ENCODE measurements at regions of chr5 and their contacts with region 1.

Region 1: DNA sequence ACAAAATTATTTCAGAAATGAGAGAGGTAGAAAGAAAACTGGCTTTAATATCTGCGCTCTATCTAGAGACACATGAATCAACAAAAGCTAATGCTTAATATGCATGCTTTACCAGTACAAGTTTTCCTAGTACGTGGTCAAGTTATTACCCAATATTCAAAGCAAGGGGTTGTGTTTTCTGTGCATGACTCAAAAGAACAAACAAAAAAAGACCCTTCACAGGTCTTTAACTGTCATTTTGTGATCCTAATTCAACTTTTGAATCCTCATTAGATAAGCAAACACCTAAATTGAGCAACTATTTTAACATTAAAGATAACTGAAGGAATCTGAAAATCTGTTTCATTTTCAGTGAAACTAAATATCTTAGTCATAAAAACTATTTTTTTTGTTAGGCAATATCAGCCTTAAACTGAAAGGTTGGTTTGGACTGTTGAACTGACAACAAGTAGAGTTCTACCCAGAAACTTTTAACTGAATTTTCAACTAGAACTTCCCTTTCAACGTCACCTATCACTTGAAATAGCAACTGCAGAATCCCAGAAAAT is 12.5 kb downstream of the ST8SIA4 start:
- DNase-seq: no peak
- H3K4me3 Mint-ChIP-seq: peak overlapping the region; percentile 62
- H3K27ac Mint-ChIP-seq: peak overlapping the region; percentile 86
- H3K4me1 Mint-ChIP-seq: peaks cover 56% of the 10 kb centered on the region
- H3K27me3 Mint-ChIP-seq: no peaks in the 10 kb centered on the region

Region 2: DNA sequence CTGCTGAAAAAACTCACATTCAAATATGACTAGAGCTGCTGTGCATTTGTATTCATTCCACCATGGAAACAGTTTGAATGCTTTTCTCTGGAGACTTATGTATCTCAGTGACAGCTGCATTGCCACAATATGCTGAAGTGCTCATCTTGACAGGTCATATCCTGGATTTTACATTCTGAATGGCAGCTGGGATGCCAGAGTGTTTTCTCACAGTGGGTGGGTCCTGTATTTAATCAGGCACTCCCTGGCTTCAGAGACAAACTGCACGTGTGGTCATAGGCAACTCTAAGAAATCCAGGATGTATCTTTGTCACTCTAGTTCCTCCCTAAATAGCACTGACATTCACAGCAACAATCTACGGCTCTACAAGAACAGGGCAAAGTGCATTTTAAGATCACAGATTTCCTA is 63.0 kb before region 1 on chr5:
- CTCF ChIA-PET with region 1: interaction called, 3 read pairs
- POLR2A ChIA-PET with region 1: no interaction called
- intact Hi-C with region 1: loop called (anchors 1 kb)
- DNase-seq: peak; percentile 23
- H3K4me3 Mint-ChIP-seq: no peak overlapping the region
- H3K27ac Mint-ChIP-seq: peak overlapping the region; percentile 79
- H3K4me1 Mint-ChIP-seq: peaks cover 43% of the 10 kb centered on the region
- H3K27me3 Mint-ChIP-seq: no peaks in the 10 kb centered on the region

Region 3: DNA sequence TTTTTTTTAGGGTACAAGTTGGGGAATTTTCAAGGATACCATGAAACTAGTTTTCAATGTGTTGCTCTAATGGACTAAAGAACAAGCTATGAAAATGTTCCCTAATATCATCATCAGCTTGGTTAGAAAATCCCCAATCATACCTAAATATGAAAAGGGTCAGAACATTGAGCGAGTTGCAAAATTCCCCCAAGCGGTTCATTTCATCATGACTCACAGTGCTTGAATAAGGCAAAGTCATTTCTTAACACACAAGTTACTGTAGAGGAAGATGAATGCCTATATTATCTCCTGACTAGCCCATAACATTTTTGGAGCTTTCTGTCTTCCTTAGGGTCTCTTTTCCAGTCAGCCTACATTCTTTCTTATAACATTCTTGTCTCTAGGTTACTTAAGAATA is 50.2 kb before region 1 on chr5:
- CTCF ChIA-PET with region 1: no interaction called
- POLR2A ChIA-PET with region 1: no interaction called
- intact Hi-C with region 1: loop called (anchors 1 kb)
- DNase-seq: peak; percentile 52
- H3K4me3 Mint-ChIP-seq: no peak overlapping the region
- H3K27ac Mint-ChIP-seq: peak overlapping the region; percentile 86
- H3K4me1 Mint-ChIP-seq: peaks cover 67% of the 10 kb centered on the region
- H3K27me3 Mint-ChIP-seq: no peaks in the 10 kb centered on the region

Region 4: GRCh38 chr5:100852988-100853449 is 37.5 kb before region 1 on chr5:
- CTCF ChIA-PET with region 1: no interaction called
- POLR2A ChIA-PET with region 1: no interaction called
- intact Hi-C with region 1: loop called (anchors 1 kb)
- DNase-seq: no peak
- H3K4me3 Mint-ChIP-seq: peak overlapping the region; percentile 69
- H3K27ac Mint-ChIP-seq: peak overlapping the region; percentile 95
- H3K4me1 Mint-ChIP-seq: peaks cover 40% of the 10 kb centered on the region
- H3K27me3 Mint-ChIP-seq: no peaks in the 10 kb centered on the region

Region 5: GRCh38 chr5:100860407-100860806 is 30.1 kb before region 1 on chr5:
- CTCF ChIA-PET with region 1: no interaction called
- POLR2A ChIA-PET with region 1: no interaction called
- intact Hi-C with region 1: loop called (anchors 1 kb)
- DNase-seq: peak; percentile 26
- H3K4me3 Mint-ChIP-seq: no peak overlapping the region
- H3K27ac Mint-ChIP-seq: peak overlapping the region; percentile 80
- H3K4me1 Mint-ChIP-seq: peaks cover 65% of the 10 kb centered on the region
- H3K27me3 Mint-ChIP-seq: no peaks in the 10 kb centered on the region

Region 6: GRCh38 chr5:100872408-100873190 is 17.9 kb before region 1 on chr5:
- CTCF ChIA-PET with region 1: interaction called, 3 read pairs
- POLR2A ChIA-PET with region 1: interaction called, 10 read pairs
- intact Hi-C with region 1: loop called (anchors 1 kb)
- DNase-seq: peak; percentile 55
- H3K4me3 Mint-ChIP-seq: no peak overlapping the region
- H3K27ac Mint-ChIP-seq: peak overlapping the region; percentile 73
- H3K4me1 Mint-ChIP-seq: peaks cover 46% of the 10 kb centered on the region
- H3K27me3 Mint-ChIP-seq: no peaks in the 10 kb centered on the region

Measured in activated CD4-positive, alpha-beta memory T cell treated with anti-CD3 and anti-CD28 coated beads for 36 hours (primary cell).